Left cardiac atrium (tissue), 4 donors: ENCODE measurements at regions of chr18 and their contacts with region 1.

Region 1: DNA sequence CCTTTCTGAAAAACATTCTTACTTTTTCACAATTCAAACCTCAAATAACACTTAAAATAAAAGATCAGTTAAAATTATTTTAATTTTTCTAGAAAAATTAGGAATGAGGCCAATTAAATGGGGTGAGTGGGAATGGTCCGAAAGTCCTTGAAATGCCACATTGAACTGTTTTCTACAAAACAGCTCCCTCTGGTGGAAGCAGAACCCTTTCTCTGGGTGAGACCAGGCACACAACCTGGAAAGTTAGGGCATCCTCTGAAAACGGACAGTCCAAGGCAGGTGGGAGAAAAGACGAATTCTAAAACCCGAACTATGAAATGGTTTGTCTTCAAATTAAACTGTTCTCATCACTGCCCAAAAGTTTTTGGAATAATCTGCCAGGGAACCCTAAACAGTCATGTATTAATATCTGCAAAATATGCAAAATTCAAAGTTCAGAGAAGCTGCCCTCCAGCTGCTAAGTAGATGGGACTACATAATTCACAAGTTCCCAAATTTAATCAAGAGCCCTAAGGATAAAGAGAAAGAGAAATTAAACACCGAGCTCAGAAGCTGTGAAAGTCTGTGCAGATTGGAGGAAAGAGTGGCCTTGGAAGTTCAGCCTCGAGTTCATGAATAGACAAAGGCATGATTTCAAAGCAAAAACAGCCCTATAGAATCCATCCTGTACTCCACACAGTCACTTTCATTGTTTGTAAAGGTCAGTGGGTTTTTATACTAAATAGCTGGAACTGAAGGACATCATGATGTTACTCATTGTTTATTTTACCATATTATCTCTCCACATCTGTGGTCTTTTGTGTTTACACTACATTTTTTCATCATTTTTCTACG is 108.3 kb downstream of the PIEZO2 start:
- DNase-seq: peak; percentile 30
- ATAC-seq: peak; percentile 70 to 73

Region 2: GRCh38 chr18:10131460-10132395 is 909.3 kb before region 1 on chr18:
- intact Hi-C with region 1: no loop called
- DNase-seq: no peak
- ATAC-seq: peak; percentile 77

Region 3: DNA sequence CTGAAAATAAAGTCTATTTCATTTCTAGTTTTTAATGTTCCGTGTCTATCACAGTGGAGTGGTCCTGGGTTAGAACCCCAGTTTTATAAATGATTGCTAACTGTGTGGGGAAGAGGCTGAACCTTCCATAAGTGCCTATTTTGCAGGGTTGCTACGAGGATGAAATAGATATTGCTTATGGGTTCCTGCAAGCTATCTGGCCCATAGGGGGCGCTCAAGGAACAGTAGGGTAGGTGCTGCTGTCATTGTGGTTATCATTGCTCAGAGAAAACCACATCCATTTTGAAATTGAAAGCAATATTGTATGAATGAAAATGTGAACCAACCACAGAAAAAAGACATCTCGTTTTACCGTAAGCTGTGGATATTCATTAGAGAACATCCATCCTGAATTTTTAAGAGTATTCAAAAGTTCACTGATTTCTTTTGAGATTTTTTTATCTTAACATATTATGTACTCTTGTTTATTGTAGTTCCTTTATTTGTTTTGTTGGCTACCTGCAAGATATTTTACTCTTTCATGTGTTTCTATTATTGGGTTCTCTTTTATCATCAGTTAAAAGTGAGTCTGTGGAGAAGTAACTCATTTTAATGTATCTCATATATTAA is 253.6 kb before region 1 on chr18:
- intact Hi-C with region 1: loop called in 1 of 2 experiments (anchors 5 kb)
- DNase-seq: peak; percentile 83
- ATAC-seq: peak in 1 of 2 donors; percentile 59

Region 4: GRCh38 chr18:10995550-10995949 is 45.5 kb before region 1 on chr18:
- intact Hi-C with region 1: no loop called
- DNase-seq: no peak
- ATAC-seq: no peak

Region 5: GRCh38 chr18:11114664-11115063 is 73.6 kb after region 1 on chr18:
- intact Hi-C with region 1: no loop called
- DNase-seq: no peak
- ATAC-seq: no peak